ENCODE measurements at regions of chr6 and their contacts with region 1.

Region 1: GRCh38 chr6:89819336-89820130 is at the start of gene MDN1:
- DNase-seq: peak; percentile 97
- H3K4me3 ChIP-seq: peak within 1 kb of the TSS; percentile 87
- H3K27ac ChIP-seq: peak within 1 kb of the TSS; percentile 62
- H3K4me1 ChIP-seq: peaks cover 29% of the 10 kb centered on the region
- CTCF ChIP-seq: no peak
- total RNA-seq, gene MDN1: 42.9 and 48.6 TPM in 2 replicates

Region 2: GRCh38 chr6:89805814-89806371 is 13.6 kb before region 1 on chr6:
- CTCF ChIA-PET with region 1: no interaction called
- POLR2A ChIA-PET with region 1: interaction called, 12 read pairs
- intact Hi-C with region 1: no loop called
- DNase-seq: no peak
- H3K4me3 ChIP-seq: no peak overlapping the region
- H3K27ac ChIP-seq: no peak overlapping the region
- H3K4me1 ChIP-seq: no peaks in the 10 kb centered on the region
- CTCF ChIP-seq: no peak

Region 3: GRCh38 chr6:89829591-89830385 is 10.3 kb after region 1 on chr6 and contains the start of gene CASP8AP2:
- CTCF ChIA-PET with region 1: interaction called, 7 read pairs
- POLR2A ChIA-PET with region 1: interaction called, 45 read pairs
- intact Hi-C with region 1: no loop called
- DNase-seq: peak; percentile 99
- H3K4me3 ChIP-seq: peak within 1 kb of the TSS; percentile 86
- H3K27ac ChIP-seq: peak within 1 kb of the TSS; percentile 79
- H3K4me1 ChIP-seq: peaks cover 13% of the 10 kb centered on the region
- CTCF ChIP-seq: no peak
- total RNA-seq, gene CASP8AP2: 22.6 and 23.7 TPM in 2 replicates

Measured in OCI-LY7 (cell line).